Heart right ventricle (tissue), 16 donors: ENCODE measurements at regions of chr5 and their contacts with region 1.

Region 1: DNA sequence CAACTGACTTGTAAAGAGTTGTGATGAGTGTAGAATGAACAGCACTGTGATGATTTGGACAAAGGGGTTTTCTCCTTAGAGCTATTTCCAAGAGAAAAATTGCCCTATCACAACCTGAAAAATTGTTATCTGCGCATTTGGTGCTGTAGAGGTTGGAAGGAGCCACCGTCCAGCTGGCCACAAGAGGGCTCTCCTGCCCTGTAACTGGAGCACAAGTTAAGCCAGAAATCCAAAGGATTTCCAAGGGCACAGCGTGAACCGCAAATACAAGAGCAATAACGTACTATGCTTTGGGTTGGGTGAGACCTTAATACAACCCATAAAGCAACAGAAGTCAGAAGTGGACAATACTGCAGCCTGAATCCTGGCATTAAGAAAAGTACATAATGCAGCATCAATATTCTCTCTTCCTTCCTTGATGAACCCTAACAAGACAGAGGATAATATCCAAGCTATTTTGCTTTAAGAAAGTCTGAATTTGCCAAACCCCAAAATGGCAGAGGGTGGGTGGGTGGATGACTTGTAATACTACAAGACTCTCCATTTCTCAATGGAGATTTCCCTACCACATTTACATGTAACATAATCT is 56.8 kb upstream of the SMIM32 start:
- DNase-seq: peak; percentile 33 to 44
- ATAC-seq: peak in 4 of 8 donors; percentile 48 to 67 (median 61)
- H3K4me3 ChIP-seq: no peak overlapping the region
- H3K27ac ChIP-seq: no peak overlapping the region
- H3K4me1 ChIP-seq: no peaks in the 10 kb centered on the region
- H3K27me3 ChIP-seq: peaks cover 0 to 44% (median 18%) of the 10 kb centered on the region in 7 donors
- CTCF ChIP-seq: peak; percentile 31 to 84 (median 73)

Region 2: DNA sequence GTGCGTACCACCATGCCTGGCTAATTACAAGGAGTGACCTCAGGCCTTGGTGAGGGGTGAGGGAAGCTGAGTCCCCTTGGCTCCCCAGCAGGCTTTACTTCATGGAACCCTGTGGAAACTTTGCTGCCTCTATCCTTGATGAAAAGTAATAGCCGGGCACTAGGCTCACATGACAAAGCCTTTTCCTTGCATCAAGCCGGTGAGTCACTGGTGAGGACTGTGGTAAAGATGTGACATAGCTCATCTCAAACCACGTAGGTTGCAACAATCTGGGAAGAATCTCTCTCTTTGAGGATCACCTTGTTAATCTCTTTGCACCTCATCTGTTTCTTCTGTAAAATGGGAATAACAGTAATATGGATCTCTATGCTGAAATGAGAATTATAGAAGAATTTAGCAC is 531.6 kb before region 1 on chr5:
- intact Hi-C with region 1: no loop called
- DNase-seq: no peak
- ATAC-seq: no peak
- H3K4me3 ChIP-seq: no peak overlapping the region
- H3K27ac ChIP-seq: no peak overlapping the region
- H3K4me1 ChIP-seq: peaks cover 0 to 13% (median 0%) of the 10 kb centered on the region in 9 donors
- H3K27me3 ChIP-seq: peaks cover 0 to 6% (median 0%) of the 10 kb centered on the region in 7 donors
- CTCF ChIP-seq: no peak

Region 3: GRCh38 chr5:136295914-136296313 is 46.1 kb after region 1 on chr5:
- intact Hi-C with region 1: no loop called
- DNase-seq: no peak
- ATAC-seq: no peak
- H3K4me3 ChIP-seq: no peak overlapping the region
- H3K27ac ChIP-seq: no peak overlapping the region
- H3K4me1 ChIP-seq: no peaks in the 10 kb centered on the region
- H3K27me3 ChIP-seq: peaks cover 0 to 5% (median 0%) of the 10 kb centered on the region in 7 donors
- CTCF ChIP-seq: no peak

Region 4: DNA sequence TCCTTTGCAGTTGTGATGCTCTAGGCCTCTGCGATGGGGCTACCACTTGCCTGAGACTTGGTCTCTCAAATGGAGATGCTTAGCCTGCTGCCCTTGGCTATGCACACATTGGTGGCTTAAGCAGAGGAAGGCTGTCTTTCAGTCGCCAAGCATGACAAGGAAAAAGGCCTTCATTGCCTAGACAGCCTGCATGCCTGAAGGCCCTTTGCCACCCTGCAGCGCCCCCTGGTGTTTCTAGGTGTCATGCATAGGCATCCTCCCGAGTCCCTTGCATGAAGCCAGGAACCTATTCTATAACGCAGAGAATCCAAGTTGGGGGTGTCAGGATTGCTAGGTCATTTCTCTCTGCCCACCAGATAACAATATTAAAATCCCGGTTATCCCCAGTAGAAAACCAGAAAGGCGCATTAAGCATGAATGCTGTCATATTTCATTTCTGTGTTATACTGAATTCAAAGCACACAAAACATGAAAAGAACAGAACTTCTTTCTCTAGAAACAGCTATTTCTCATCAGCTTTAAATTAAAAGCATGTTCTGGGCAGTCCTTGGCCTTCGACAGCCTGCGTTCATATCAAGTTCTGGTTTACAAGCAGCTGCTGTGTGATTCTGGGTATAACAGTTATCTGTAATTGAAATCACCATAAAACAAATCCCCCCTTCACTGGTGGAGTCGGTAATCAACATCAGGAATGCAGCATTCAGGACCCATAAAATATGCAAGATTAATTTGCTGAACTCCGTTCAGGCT is 175.2 kb after region 1 on chr5:
- intact Hi-C with region 1: loop called in 3 of 10 experiments (anchors 10 kb)
- DNase-seq: peak; percentile 59 to 66
- ATAC-seq: peak in 3 of 8 donors; percentile 46 to 52 (median 51)
- H3K4me3 ChIP-seq: no peak overlapping the region
- H3K27ac ChIP-seq: no peak overlapping the region
- H3K4me1 ChIP-seq: no peaks in the 10 kb centered on the region
- H3K27me3 ChIP-seq: peaks cover 0 to 22% (median 10%) of the 10 kb centered on the region in 7 donors
- CTCF ChIP-seq: peak; percentile 18 to 70 (median 62)

Region 5: GRCh38 chr5:136686192-136686872 is 436.6 kb after region 1 on chr5:
- intact Hi-C with region 1: loop called in 2 of 10 experiments (anchors 10 kb)
- DNase-seq: no peak
- ATAC-seq: peak in 1 of 8 donors; percentile 29
- H3K4me3 ChIP-seq: no peak overlapping the region
- H3K27ac ChIP-seq: no peak overlapping the region
- H3K4me1 ChIP-seq: no peaks in the 10 kb centered on the region
- H3K27me3 ChIP-seq: peaks cover 0 to 23% (median 14%) of the 10 kb centered on the region in 7 donors
- CTCF ChIP-seq: peak in 5 of 9 donors; percentile 8 to 27 (median 16)

Region 6: GRCh38 chr5:136769900-136770684 is 520.3 kb after region 1 on chr5:
- intact Hi-C with region 1: loop called (anchors 1 to 5 kb)
- DNase-seq: peak; percentile 28 to 40
- ATAC-seq: peak in 7 of 8 donors; percentile 55 to 89 (median 74)
- H3K4me3 ChIP-seq: no peak overlapping the region
- H3K27ac ChIP-seq: no peak overlapping the region
- H3K4me1 ChIP-seq: no peaks in the 10 kb centered on the region
- H3K27me3 ChIP-seq: peaks cover 0 to 33% (median 7%) of the 10 kb centered on the region in 7 donors
- CTCF ChIP-seq: peak; percentile 60 to 80 (median 68)